ENCODE measurements at regions of chr11 and their contacts with region 1.

Region 1: DNA sequence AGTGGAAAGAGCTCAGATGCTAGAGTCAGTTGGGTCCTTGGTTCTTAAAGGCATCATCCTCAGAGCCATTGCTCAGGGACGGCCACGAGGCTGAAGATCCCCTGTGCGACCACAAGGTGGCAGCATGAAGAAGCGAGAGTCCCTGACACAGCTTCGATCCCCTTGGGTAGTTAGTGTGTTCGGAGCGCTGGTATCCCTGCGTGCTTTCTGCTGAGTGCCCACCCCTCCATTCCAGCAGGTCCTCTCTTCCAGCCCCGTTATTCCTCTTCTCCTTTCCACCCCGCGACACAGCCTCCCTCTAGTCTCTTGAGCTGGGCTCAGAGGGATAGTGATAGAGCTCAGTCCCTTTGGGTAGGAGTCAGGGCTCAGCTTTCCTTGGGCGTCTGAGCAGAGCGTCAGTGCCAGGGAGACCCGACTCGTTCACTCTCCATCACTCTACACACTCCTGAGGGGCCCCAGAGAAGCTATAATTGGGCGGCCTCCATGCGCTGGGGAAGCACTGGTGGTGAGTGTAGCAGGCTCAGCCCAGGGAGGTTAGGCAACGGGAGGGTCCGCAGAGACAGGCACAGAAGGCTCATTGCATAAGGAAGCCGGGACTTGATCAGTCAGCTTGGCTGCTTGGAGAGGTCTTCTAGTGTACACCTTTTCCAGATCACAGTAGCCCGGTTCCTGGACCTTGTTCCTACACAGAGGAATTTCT is at the start of gene OR51D1:
- DNase-seq: peak; percentile 82 to 87 (median 84)
- ATAC-seq: peak; percentile 99
- H3K4me3 ChIP-seq: no peak within 1 kb of the TSS
- H3K27ac ChIP-seq: no peak within 1 kb of the TSS
- H3K4me1 ChIP-seq: no peaks in the 10 kb centered on the region; a peak in 1 of 5 replicates
- H3K27me3 ChIP-seq: peaks cover 0 to 25% of the 10 kb centered on the region in 2 experiments; a peak in 3 of 5 replicates
- CTCF ChIP-seq: peak; percentile 84 to 91 (median 88)
- EP300 ChIP-seq: no peak
- POLR2A ChIP-seq: no peak
- RAD21 ChIP-seq: peak; percentile 75 to 91
- polyA plus RNA-seq, gene OR51D1: not detected

Region 2: DNA sequence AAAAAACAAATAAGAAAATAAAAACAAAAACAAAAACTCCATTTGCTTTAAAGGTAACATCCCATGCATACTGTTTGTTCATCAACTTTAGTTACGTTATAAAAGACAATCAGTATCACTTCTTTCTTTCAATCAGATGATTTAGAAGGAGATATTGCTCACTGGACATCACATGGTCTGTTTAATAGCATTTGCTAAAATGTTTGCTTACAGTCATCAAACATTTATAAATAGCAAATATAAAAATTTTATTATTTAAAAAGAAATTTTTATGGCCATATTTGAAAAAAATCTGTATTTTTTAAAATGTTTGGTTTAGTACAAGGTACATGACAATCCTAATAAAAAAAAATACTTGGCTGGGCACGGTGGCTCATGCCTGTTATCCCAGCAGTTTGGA is 90.1 kb after region 1 on chr11:
- CTCF ChIA-PET with region 1: no interaction called
- POLR2A ChIA-PET with region 1: no interaction called
- in situ Hi-C with region 1: no loop called
- intact Hi-C with region 1: loop called (anchors 5 kb)
- DNase-seq: no peak
- ATAC-seq: no peak
- H3K4me3 ChIP-seq: no peak overlapping the region
- H3K27ac ChIP-seq: no peak overlapping the region
- H3K4me1 ChIP-seq: 0 out of 5 replicates have a peak, but pooled peaks cover 0 to 3% of the 10 kb centered on the region in 2 experiments
- H3K27me3 ChIP-seq: peaks cover 0 to 18% of the 10 kb centered on the region in 2 experiments; a peak in 4 of 5 replicates
- CTCF ChIP-seq: no peak
- EP300 ChIP-seq: no peak
- POLR2A ChIP-seq: no peak
- RAD21 ChIP-seq: no peak

Region 3: DNA sequence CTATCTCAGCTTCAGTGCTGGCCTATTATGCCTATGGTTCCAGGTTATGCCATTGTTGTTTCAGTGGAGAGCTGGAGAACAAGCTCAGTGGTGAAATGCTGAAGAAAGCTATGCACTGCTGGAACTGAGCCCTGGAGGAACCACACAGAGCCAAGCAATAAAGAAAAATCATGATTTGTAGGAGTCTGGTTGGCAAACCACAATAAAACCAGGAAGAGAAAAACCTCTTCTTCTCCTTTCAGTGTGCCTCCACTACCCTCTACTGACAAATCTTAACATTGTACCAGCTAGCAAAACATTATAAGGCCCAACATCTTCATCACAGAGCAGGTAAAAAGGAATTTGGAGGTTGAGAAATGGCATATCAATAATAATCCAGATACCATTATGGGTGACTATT is 189.3 kb after region 1 on chr11:
- CTCF ChIA-PET with region 1: interaction called, 5 read pairs
- POLR2A ChIA-PET with region 1: no interaction called
- in situ Hi-C with region 1: no loop called
- intact Hi-C with region 1: loop called (anchors 2 kb)
- DNase-seq: peak in 1 of 4 experiments; percentile 4
- ATAC-seq: no peak
- H3K4me3 ChIP-seq: no peak overlapping the region
- H3K27ac ChIP-seq: no peak overlapping the region
- H3K4me1 ChIP-seq: no peaks in the 10 kb centered on the region
- H3K27me3 ChIP-seq: peaks cover 2 to 6% of the 10 kb centered on the region in 2 experiments; a peak in 3 of 5 replicates
- CTCF ChIP-seq: peak; percentile 3 to 46 (median 24); a peak in 3 of 6 replicates
- EP300 ChIP-seq: no peak
- POLR2A ChIP-seq: no peak
- RAD21 ChIP-seq: peak; percentile 24 to 50

Region 4: GRCh38 chr11:4865855-4866254 is 228.7 kb after region 1 on chr11:
- CTCF ChIA-PET with region 1: no interaction called
- POLR2A ChIA-PET with region 1: no interaction called
- in situ Hi-C with region 1: no loop called
- intact Hi-C with region 1: no loop called
- DNase-seq: no peak
- ATAC-seq: no peak
- H3K4me3 ChIP-seq: no peak overlapping the region
- H3K27ac ChIP-seq: no peak overlapping the region
- H3K4me1 ChIP-seq: no peaks in the 10 kb centered on the region
- H3K27me3 ChIP-seq: no peaks in the 10 kb centered on the region
- CTCF ChIP-seq: no peak
- EP300 ChIP-seq: no peak
- POLR2A ChIP-seq: no peak
- RAD21 ChIP-seq: no peak

Region 5: DNA sequence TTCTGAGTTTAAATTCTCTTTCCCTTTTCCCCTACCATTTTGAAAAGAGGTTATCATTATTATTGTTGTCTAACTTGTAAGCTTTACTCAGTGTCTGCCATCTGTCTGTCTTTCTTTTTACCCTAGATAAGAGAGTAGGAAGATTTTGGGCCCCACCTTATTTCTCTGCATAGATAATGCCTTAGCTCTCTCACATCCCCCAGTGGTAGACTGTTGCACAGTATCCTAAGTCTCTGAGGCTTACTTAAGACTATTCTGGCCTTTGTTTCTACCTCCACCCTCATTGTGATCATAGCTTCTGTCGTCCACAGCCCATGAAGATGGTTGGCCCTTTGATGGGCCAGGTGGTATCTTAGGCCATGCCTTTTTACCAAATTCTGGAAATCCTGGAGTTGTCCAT is 353.9 kb after region 1 on chr11:
- CTCF ChIA-PET with region 1: interaction called, 5 read pairs
- POLR2A ChIA-PET with region 1: no interaction called
- in situ Hi-C with region 1: no loop called
- intact Hi-C with region 1: loop called (anchors 1 kb)
- DNase-seq: peak; percentile 10 to 61 (median 38)
- ATAC-seq: peak; percentile 100
- H3K4me3 ChIP-seq: no peak overlapping the region
- H3K27ac ChIP-seq: no peak overlapping the region
- H3K4me1 ChIP-seq: peaks cover 0 to 4% of the 10 kb centered on the region in 2 experiments; a peak in 1 of 5 replicates
- H3K27me3 ChIP-seq: peaks cover 2 to 9% of the 10 kb centered on the region in 2 experiments; a peak in 1 of 5 replicates
- CTCF ChIP-seq: peak; percentile 62 to 79 (median 77)
- EP300 ChIP-seq: no peak
- POLR2A ChIP-seq: no peak
- RAD21 ChIP-seq: peak; percentile 69 to 86

Region 6: GRCh38 chr11:5102246-5102645 is 465.1 kb after region 1 on chr11:
- CTCF ChIA-PET with region 1: no interaction called
- POLR2A ChIA-PET with region 1: no interaction called
- in situ Hi-C with region 1: no loop called
- intact Hi-C with region 1: loop called (anchors 5 kb)
- DNase-seq: no peak
- ATAC-seq: no peak; the same call in 1 of the 3 replicates
- H3K4me3 ChIP-seq: no peak overlapping the region
- H3K27ac ChIP-seq: no peak overlapping the region
- H3K4me1 ChIP-seq: peaks cover 0 to 2% of the 10 kb centered on the region in 2 experiments; a peak in 2 of 5 replicates
- H3K27me3 ChIP-seq: peaks cover 0 to 9% of the 10 kb centered on the region in 2 experiments; a peak in 2 of 5 replicates
- CTCF ChIP-seq: no peak
- EP300 ChIP-seq: no peak
- POLR2A ChIP-seq: no peak
- RAD21 ChIP-seq: no peak